Activated naive CD4-positive, alpha-beta T cell treated with anti-CD3 and anti-CD28 coated beads for 36 hours (primary cell): ENCODE measurements at regions of chr10 and their contacts with region 1.

Region 1: DNA sequence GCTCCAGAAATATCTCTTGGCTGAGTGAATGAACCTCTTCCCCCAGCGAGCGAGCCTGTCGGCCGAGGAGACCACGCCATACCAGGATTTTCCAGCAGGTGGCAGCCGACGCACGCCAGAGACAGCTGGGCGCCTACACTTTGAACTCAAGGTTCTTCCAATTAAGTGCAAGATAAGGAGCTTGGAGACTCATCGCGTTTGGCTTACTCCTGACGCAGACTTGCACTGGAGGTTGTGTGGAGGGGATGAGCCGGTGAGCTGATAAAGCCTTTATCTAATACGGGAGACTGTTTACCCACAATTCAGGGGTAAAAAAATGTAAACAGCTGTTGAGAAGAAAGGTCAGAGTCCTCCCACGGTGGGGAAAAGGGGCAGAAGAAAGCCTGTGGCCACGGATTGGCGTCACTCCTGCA is 45.9 kb upstream of the EMX2 start:
- DNase-seq: peak; percentile 80
- H3K4me3 Mint-ChIP-seq: no peak overlapping the region
- H3K27ac Mint-ChIP-seq: no peak overlapping the region
- H3K4me1 Mint-ChIP-seq: peaks cover 2% of the 10 kb centered on the region
- H3K27me3 Mint-ChIP-seq: peaks cover 26% of the 10 kb centered on the region

Region 2: DNA sequence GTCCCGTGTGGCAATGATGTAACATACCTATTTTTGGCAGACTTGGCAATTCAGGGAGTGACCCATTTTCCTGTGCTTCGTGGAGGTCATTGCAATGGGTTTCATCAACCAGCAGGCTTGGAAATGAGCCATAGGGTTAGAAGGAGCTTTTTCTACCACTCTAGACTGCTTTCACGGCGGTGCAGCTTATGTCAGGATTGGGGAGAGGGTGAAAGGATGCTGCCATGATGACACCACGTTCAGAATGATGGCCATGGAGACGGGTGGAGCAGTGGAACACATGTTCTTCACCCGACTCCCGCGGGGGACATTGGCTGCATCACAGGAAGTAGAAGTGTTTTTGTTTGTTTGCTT is 266.2 kb after region 1 on chr10:
- CTCF ChIA-PET with region 1: no interaction called
- intact Hi-C with region 1: loop called (anchors 1 kb)
- DNase-seq: no peak
- H3K4me3 Mint-ChIP-seq: no peak overlapping the region
- H3K27ac Mint-ChIP-seq: no peak overlapping the region
- H3K4me1 Mint-ChIP-seq: no peaks in the 10 kb centered on the region
- H3K27me3 Mint-ChIP-seq: peaks cover 15% of the 10 kb centered on the region

Region 3: DNA sequence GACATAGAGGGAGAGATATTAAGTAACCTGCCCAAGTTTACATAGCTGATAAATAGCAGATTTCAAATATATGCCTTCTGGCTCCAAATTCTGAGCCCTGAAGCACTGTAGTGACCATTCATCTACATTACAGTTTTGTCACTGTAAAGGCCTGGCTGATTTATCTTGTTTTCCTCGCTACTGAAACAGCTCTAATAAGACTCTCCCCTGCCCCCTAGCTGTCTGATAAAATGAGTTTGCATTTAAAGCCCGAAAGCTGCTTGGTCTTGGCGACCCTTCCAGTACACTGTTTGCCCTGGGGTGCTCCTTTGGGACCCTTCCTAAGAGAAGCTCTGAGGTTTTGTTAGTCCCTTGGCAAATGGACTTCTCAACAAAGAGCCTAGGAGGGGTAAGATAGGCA is 609.8 kb after region 1 on chr10:
- CTCF ChIA-PET with region 1: no interaction called
- intact Hi-C with region 1: loop called (anchors 10 kb)
- DNase-seq: no peak
- H3K4me3 Mint-ChIP-seq: no peak overlapping the region
- H3K27ac Mint-ChIP-seq: no peak overlapping the region
- H3K4me1 Mint-ChIP-seq: no peaks in the 10 kb centered on the region
- H3K27me3 Mint-ChIP-seq: peaks cover 16% of the 10 kb centered on the region

Region 4: GRCh38 chr10:118241229-118242137 is 744.9 kb after region 1 on chr10:
- CTCF ChIA-PET with region 1: interaction called, 36 read pairs
- intact Hi-C with region 1: loop called (anchors 1 kb)
- DNase-seq: peak; percentile 82
- H3K4me3 Mint-ChIP-seq: no peak overlapping the region
- H3K27ac Mint-ChIP-seq: no peak overlapping the region
- H3K4me1 Mint-ChIP-seq: no peaks in the 10 kb centered on the region
- H3K27me3 Mint-ChIP-seq: peaks cover 52% of the 10 kb centered on the region

Region 5: DNA sequence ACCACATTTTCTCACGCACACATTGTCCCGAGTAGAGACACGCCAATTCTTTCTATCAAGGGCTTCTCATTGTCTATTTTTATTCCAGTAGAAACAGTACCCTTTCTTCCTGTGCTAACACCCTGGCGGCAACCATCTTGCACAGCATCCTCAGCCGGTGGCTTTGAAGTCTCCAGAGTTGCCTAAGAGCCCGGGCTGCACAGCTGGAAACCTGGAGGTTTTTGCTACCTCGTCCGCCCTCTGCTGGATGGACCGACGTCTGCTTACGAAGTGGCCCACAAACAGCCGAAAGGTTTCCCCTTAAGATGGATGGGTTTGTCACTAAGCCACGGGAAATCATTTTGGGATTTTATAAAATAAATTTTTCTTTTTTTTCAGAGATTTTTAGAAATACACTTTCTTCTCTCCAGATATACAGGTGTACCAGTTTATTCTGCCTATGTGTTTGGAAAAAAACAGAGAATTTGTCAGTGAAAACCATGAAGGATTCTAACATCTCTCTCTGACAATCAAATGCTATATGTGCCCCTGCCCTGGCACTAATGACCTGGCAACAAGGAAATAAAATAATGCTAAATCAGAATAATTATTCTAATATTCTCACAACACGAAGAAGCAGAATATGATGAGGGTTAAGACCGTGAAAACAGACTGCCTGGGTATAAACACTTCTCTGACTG is 927.3 kb after region 1 on chr10:
- CTCF ChIA-PET with region 1: interaction called, 10 read pairs
- intact Hi-C with region 1: loop called (anchors 1 kb)
- DNase-seq: peak; percentile 87
- H3K4me3 Mint-ChIP-seq: no peak overlapping the region
- H3K27ac Mint-ChIP-seq: no peak overlapping the region
- H3K4me1 Mint-ChIP-seq: peaks cover 4% of the 10 kb centered on the region
- H3K27me3 Mint-ChIP-seq: peaks cover 9% of the 10 kb centered on the region

Region 6: DNA sequence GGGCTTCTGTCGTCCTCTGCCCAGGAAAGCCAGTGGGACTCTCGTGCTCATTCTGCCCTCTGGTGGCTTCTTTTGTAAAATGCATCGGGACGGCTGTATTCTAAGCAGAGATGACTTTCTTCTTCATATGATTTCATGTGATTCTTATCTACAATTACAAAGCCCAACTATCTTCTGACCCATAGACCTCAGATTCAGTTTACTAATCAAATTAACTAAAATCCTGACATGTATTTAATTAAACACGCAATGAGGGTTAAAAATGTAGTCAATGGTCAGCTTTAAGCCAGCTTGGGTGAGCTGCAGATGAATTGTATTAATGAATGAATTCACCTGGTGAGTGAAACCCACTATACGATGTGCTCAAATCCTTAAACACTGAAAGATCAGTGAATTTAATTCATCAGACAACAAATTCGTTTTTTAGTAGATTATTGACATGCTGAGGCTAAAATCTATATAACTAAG is 963.1 kb after region 1 on chr10:
- CTCF ChIA-PET with region 1: interaction called, 17 read pairs
- intact Hi-C with region 1: loop called (anchors 1 kb)
- DNase-seq: peak; percentile 76
- H3K4me3 Mint-ChIP-seq: no peak overlapping the region
- H3K27ac Mint-ChIP-seq: no peak overlapping the region
- H3K4me1 Mint-ChIP-seq: peaks cover 5% of the 10 kb centered on the region
- H3K27me3 Mint-ChIP-seq: peaks cover 19% of the 10 kb centered on the region

Region 7: GRCh38 chr10:118543714-118544400 is 1047.2 kb after region 1 on chr10:
- CTCF ChIA-PET with region 1: interaction called, 4 read pairs
- intact Hi-C with region 1: loop called (anchors 5 kb)
- DNase-seq: peak; percentile 70
- H3K4me3 Mint-ChIP-seq: no peak overlapping the region
- H3K27ac Mint-ChIP-seq: no peak overlapping the region
- H3K4me1 Mint-ChIP-seq: no peaks in the 10 kb centered on the region
- H3K27me3 Mint-ChIP-seq: peaks cover 42% of the 10 kb centered on the region